B cell (primary cell): ENCODE measurements at regions of chrX and their contacts with region 1.

Region 1: GRCh38 chrX:40175511-40176350 is 78.0 kb upstream of the BCOR start:
- DNase-seq: peak; percentile 93
- ATAC-seq: peak; percentile 53
- H3K4me3 ChIP-seq: peak overlapping the region; percentile 38 to 72 (median 60)
- H3K4me3 Mint-ChIP-seq: peak overlapping the region; percentile 89
- H3K27ac ChIP-seq: peak overlapping the region; percentile 97 to 99
- H3K27ac Mint-ChIP-seq: peak overlapping the region; percentile 100
- H3K4me1 ChIP-seq: peaks cover 37 to 51% of the 10 kb centered on the region in 2 donors
- H3K4me1 Mint-ChIP-seq: peaks cover 48% of the 10 kb centered on the region
- H3K27me3 ChIP-seq: no peaks in the 10 kb centered on the region
- H3K27me3 Mint-ChIP-seq: no peaks in the 10 kb centered on the region
- CTCF ChIP-seq: no peak

Region 2: GRCh38 chrX:39827951-39828350 is 347.8 kb before region 1 on chrX:
- CTCF ChIA-PET with region 1: no interaction called
- POLR2A ChIA-PET with region 1: no interaction called
- intact Hi-C with region 1: no loop called
- DNase-seq: peak; percentile 84
- ATAC-seq: peak; percentile 98
- H3K4me3 ChIP-seq: no peak overlapping the region
- H3K4me3 Mint-ChIP-seq: peak overlapping the region; percentile 52
- H3K27ac ChIP-seq: no peak overlapping the region
- H3K27ac Mint-ChIP-seq: peak overlapping the region; percentile 72
- H3K4me1 ChIP-seq: peaks cover 17% of the 10 kb centered on the region in 2 donors
- H3K4me1 Mint-ChIP-seq: peaks cover 28% of the 10 kb centered on the region
- H3K27me3 ChIP-seq: peaks cover 0 to 57% (median 11%) of the 10 kb centered on the region in 4 experiments
- H3K27me3 Mint-ChIP-seq: peaks cover 48% of the 10 kb centered on the region
- CTCF ChIP-seq: no peak

Region 3: GRCh38 chrX:40153335-40154249 is 22.1 kb before region 1 on chrX:
- CTCF ChIA-PET with region 1: interaction called, 24 read pairs
- POLR2A ChIA-PET with region 1: interaction called, 24 read pairs
- intact Hi-C with region 1: loop called (anchors 1 kb)
- DNase-seq: peak; percentile 87
- ATAC-seq: peak; percentile 71
- H3K4me3 ChIP-seq: peak overlapping the region in 4 of 5 experiments; percentile 46 to 59 (median 54)
- H3K4me3 Mint-ChIP-seq: peak overlapping the region; percentile 89
- H3K27ac ChIP-seq: peak overlapping the region; percentile 9 to 50
- H3K27ac Mint-ChIP-seq: peak overlapping the region; percentile 88
- H3K4me1 ChIP-seq: peaks cover 41 to 63% of the 10 kb centered on the region in 2 donors
- H3K4me1 Mint-ChIP-seq: peaks cover 46% of the 10 kb centered on the region
- H3K27me3 ChIP-seq: no peaks in the 10 kb centered on the region
- H3K27me3 Mint-ChIP-seq: peaks cover 3% of the 10 kb centered on the region
- CTCF ChIP-seq: no peak

Region 4: GRCh38 chrX:40201329-40201885 is 25.7 kb after region 1 on chrX:
- CTCF ChIA-PET with region 1: no interaction called
- POLR2A ChIA-PET with region 1: interaction called, 8 read pairs
- intact Hi-C with region 1: loop called (anchors 2 kb)
- DNase-seq: peak; percentile 55
- ATAC-seq: peak; percentile 77
- H3K4me3 ChIP-seq: no peak overlapping the region
- H3K4me3 Mint-ChIP-seq: peak overlapping the region; percentile 53
- H3K27ac ChIP-seq: peak overlapping the region; percentile 12 to 55
- H3K27ac Mint-ChIP-seq: peak overlapping the region; percentile 80
- H3K4me1 ChIP-seq: peaks cover 18 to 22% of the 10 kb centered on the region in 2 donors
- H3K4me1 Mint-ChIP-seq: peaks cover 24% of the 10 kb centered on the region
- H3K27me3 ChIP-seq: no peaks in the 10 kb centered on the region
- H3K27me3 Mint-ChIP-seq: no peaks in the 10 kb centered on the region
- CTCF ChIP-seq: no peak

Region 5: GRCh38 chrX:40207626-40208025 is 31.9 kb after region 1 on chrX:
- CTCF ChIA-PET with region 1: interaction called, 3 read pairs
- POLR2A ChIA-PET with region 1: interaction called, 8 read pairs
- intact Hi-C with region 1: loop called (anchors 1 kb)
- DNase-seq: no peak
- ATAC-seq: peak; percentile 17
- H3K4me3 ChIP-seq: no peak overlapping the region
- H3K4me3 Mint-ChIP-seq: no peak overlapping the region
- H3K27ac ChIP-seq: no peak overlapping the region
- H3K27ac Mint-ChIP-seq: no peak overlapping the region
- H3K4me1 ChIP-seq: peaks cover 14 to 19% of the 10 kb centered on the region in 2 donors
- H3K4me1 Mint-ChIP-seq: peaks cover 23% of the 10 kb centered on the region
- H3K27me3 ChIP-seq: no peaks in the 10 kb centered on the region
- H3K27me3 Mint-ChIP-seq: no peaks in the 10 kb centered on the region
- CTCF ChIP-seq: no peak

Region 6: GRCh38 chrX:40266490-40267333 is 91.0 kb after region 1 on chrX:
- CTCF ChIA-PET with region 1: interaction called, 6 read pairs
- POLR2A ChIA-PET with region 1: interaction called, 8 read pairs
- intact Hi-C with region 1: loop called (anchors 5 kb)
- DNase-seq: peak; percentile 58
- ATAC-seq: peak; percentile 51
- H3K4me3 ChIP-seq: peak overlapping the region in 4 of 5 experiments; percentile 35 to 50 (median 44)
- H3K4me3 Mint-ChIP-seq: peak overlapping the region; percentile 84
- H3K27ac ChIP-seq: no peak overlapping the region
- H3K27ac Mint-ChIP-seq: peak overlapping the region; percentile 56
- H3K4me1 ChIP-seq: peaks cover 16 to 23% of the 10 kb centered on the region in 2 donors
- H3K4me1 Mint-ChIP-seq: peaks cover 13% of the 10 kb centered on the region
- H3K27me3 ChIP-seq: no peaks in the 10 kb centered on the region
- H3K27me3 Mint-ChIP-seq: no peaks in the 10 kb centered on the region
- CTCF ChIP-seq: peak; percentile 50

Region 7: DNA sequence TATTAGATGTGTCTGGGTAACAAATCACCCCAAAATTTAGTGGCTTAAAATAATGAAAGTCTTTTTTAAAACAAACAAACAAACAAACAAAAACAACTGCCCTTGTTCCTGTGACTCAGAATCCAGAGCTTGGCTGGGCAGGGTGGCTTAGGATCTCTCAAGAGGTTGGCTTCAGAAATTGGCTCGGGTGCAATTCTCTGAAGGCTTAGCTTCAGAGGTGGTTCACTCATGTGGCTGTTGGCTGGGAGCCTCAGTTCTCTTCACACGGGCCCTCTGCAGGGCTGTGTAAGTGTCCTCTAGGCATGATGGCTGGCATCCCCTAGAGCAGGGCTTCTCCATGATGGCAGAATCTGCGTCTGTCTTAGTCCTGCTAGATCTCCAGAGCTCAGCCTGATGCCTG is 101.9 kb after region 1 on chrX:
- CTCF ChIA-PET with region 1: no interaction called
- POLR2A ChIA-PET with region 1: interaction called, 10 read pairs
- intact Hi-C with region 1: no loop called
- DNase-seq: no peak
- ATAC-seq: no peak
- H3K4me3 ChIP-seq: no peak overlapping the region
- H3K4me3 Mint-ChIP-seq: no peak overlapping the region
- H3K27ac ChIP-seq: no peak overlapping the region
- H3K27ac Mint-ChIP-seq: no peak overlapping the region
- H3K4me1 ChIP-seq: peaks cover 14% of the 10 kb centered on the region in 2 donors
- H3K4me1 Mint-ChIP-seq: peaks cover 9% of the 10 kb centered on the region
- H3K27me3 ChIP-seq: peaks cover 0 to 3% (median 0%) of the 10 kb centered on the region in 4 experiments
- H3K27me3 Mint-ChIP-seq: no peaks in the 10 kb centered on the region
- CTCF ChIP-seq: no peak

Region 8: GRCh38 chrX:40573763-40574162 is 398.0 kb after region 1 on chrX:
- CTCF ChIA-PET with region 1: no interaction called
- POLR2A ChIA-PET with region 1: no interaction called
- intact Hi-C with region 1: no loop called
- DNase-seq: peak; percentile 26
- ATAC-seq: peak; percentile 36
- H3K4me3 ChIP-seq: no peak overlapping the region
- H3K4me3 Mint-ChIP-seq: no peak overlapping the region
- H3K27ac ChIP-seq: no peak overlapping the region
- H3K27ac Mint-ChIP-seq: no peak overlapping the region
- H3K4me1 ChIP-seq: peaks cover 11 to 17% of the 10 kb centered on the region in 2 donors
- H3K4me1 Mint-ChIP-seq: peaks cover 16% of the 10 kb centered on the region
- H3K27me3 ChIP-seq: no peaks in the 10 kb centered on the region
- H3K27me3 Mint-ChIP-seq: no peaks in the 10 kb centered on the region
- CTCF ChIP-seq: peak; percentile 56